CD8-positive, alpha-beta T cell (primary cell): ENCODE measurements at regions of chr9 and their contacts with region 1.

Region 1: DNA sequence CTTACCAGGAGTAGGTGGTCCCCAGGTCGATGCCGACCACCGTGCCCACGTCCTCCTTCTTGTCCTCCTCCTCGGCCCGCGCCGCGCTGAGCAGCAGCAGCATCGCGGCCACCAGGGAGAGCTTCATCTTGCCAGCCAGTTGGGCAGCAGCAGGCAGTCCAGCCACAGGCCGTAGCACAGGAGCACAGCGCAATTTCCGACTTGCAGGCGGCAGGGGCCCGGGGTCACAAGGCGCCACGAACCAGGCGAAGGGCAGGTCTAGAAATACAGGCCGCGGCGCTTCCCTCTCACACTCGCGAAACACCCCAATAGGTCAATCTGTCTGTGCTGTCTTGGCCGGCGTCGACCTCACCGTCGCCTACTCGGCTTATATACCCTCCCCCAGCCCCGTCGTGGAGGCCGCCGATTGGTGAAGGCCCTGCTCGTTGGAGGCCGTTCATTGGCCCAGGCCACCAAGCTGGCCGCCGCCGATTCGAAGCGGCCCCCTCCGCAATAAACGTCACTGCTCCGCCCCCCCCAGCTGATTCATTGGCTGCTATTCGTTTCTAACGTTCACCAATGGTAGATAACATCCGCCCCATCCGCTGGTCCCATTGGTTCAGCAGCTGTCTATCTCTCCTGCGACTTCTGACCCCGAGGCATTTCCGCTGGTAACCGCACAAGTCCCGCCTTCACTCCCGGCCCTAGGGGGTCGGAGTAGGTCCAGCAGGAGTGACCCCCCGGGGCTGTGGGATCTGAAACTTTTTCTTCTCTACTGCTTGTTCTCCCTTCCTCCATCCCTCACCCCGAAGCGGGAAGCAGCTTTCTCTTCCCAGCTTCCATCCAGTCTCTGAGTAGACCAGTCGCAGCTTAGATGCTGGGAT is at the start of gene HSPA5:
- DNase-seq: peak; percentile 98 to 100 (median 99)
- ATAC-seq: peak; percentile 90
- H3K4me3 ChIP-seq: peak within 1 kb of the TSS; percentile 91 to 93
- H3K4me3 Mint-ChIP-seq: peak within 1 kb of the TSS; percentile 97
- H3K27ac ChIP-seq: peak within 1 kb of the TSS; percentile 97 to 99
- H3K27ac Mint-ChIP-seq: peak within 1 kb of the TSS; percentile 99
- H3K4me1 ChIP-seq: peaks cover 46% of the 10 kb centered on the region
- H3K4me1 Mint-ChIP-seq: peaks cover 46% of the 10 kb centered on the region
- H3K27me3 ChIP-seq: no peaks in the 10 kb centered on the region
- H3K27me3 Mint-ChIP-seq: no peaks in the 10 kb centered on the region
- CTCF ChIP-seq: no peak
- total RNA-seq, gene HSPA5: 354 to 372 TPM

Region 2: DNA sequence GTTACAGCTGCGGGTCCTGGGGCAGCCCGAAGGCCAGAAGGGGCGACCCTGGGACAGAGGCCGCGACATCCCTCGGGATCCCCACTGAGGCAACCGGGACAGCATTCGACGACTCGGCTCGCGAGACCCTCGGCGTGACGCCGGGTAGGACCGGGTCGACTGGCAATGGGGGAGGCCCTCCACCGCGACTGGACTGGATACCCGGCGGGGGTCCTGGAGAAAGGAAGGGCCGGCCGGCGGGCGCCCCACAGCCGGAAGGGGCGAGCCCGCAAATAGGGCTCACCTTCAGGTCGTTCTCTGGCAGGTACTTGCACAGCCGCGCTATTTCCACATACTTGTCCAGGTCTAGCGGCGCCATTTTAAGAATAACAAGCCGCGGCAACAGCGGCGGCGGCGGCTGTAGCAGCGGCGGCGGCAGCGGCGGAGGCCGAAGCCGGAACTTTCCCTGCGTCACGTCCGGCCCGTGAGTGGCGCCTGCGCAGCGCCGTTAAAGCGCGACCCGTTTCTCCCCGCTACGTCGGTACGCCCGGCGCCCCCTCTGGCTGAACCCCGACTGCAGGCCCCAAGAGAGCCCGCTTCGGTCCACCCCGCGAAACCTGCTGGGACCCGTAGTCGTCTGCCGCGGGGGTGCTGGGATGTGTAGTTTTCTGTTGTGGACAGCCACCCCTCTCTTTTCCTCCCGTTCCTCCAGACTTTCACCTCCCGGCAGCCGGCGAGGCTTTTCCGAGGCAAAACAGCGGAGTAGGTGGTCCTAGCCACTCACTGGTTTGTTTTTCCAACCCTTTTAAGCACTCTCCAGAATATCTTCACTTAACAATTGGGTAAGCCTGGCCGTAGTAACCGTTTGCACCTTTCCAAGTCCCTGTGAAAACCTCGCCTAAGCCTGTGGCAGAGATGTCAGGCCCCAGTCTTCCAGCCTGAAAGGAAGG is 51.6 kb before region 1 on chr9 and contains the start of gene PPP6C:
- CTCF ChIA-PET with region 1: interaction called, 5 read pairs
- POLR2A ChIA-PET with region 1: interaction called, 15 read pairs
- intact Hi-C with region 1: loop called (anchors 1 kb)
- DNase-seq: peak; percentile 94 to 99 (median 97)
- ATAC-seq: peak; percentile 95
- H3K4me3 ChIP-seq: peak within 1 kb of the TSS; percentile 98
- H3K4me3 Mint-ChIP-seq: peak within 1 kb of the TSS; percentile 97
- H3K27ac ChIP-seq: peak within 1 kb of the TSS; percentile 97 to 98
- H3K27ac Mint-ChIP-seq: peak within 1 kb of the TSS; percentile 93
- H3K4me1 ChIP-seq: peaks cover 56% of the 10 kb centered on the region
- H3K4me1 Mint-ChIP-seq: peaks cover 71% of the 10 kb centered on the region
- H3K27me3 ChIP-seq: no peaks in the 10 kb centered on the region
- H3K27me3 Mint-ChIP-seq: no peaks in the 10 kb centered on the region
- CTCF ChIP-seq: peak; percentile 63
- total RNA-seq, gene PPP6C: 37.8 to 38.3 TPM

Region 3: GRCh38 chr9:125261501-125262293 is 20.5 kb after region 1 on chr9 and contains the start of gene GAPVD1:
- CTCF ChIA-PET with region 1: interaction called, 4 read pairs
- POLR2A ChIA-PET with region 1: interaction called, 40 read pairs
- intact Hi-C with region 1: loop called (anchors 1 kb)
- DNase-seq: peak; percentile 72 to 94 (median 86)
- ATAC-seq: peak; percentile 92
- H3K4me3 ChIP-seq: peak within 1 kb of the TSS; percentile 90 to 99
- H3K4me3 Mint-ChIP-seq: peak within 1 kb of the TSS; percentile 98
- H3K27ac ChIP-seq: peak within 1 kb of the TSS; percentile 67 to 78
- H3K27ac Mint-ChIP-seq: peak within 1 kb of the TSS; percentile 94
- H3K4me1 ChIP-seq: peaks cover 29% of the 10 kb centered on the region
- H3K4me1 Mint-ChIP-seq: peaks cover 49% of the 10 kb centered on the region
- H3K27me3 ChIP-seq: no peaks in the 10 kb centered on the region
- H3K27me3 Mint-ChIP-seq: peaks cover 2% of the 10 kb centered on the region
- CTCF ChIP-seq: peak; percentile 54
- total RNA-seq, gene GAPVD1: 81.0 to 84.1 TPM

Region 4: DNA sequence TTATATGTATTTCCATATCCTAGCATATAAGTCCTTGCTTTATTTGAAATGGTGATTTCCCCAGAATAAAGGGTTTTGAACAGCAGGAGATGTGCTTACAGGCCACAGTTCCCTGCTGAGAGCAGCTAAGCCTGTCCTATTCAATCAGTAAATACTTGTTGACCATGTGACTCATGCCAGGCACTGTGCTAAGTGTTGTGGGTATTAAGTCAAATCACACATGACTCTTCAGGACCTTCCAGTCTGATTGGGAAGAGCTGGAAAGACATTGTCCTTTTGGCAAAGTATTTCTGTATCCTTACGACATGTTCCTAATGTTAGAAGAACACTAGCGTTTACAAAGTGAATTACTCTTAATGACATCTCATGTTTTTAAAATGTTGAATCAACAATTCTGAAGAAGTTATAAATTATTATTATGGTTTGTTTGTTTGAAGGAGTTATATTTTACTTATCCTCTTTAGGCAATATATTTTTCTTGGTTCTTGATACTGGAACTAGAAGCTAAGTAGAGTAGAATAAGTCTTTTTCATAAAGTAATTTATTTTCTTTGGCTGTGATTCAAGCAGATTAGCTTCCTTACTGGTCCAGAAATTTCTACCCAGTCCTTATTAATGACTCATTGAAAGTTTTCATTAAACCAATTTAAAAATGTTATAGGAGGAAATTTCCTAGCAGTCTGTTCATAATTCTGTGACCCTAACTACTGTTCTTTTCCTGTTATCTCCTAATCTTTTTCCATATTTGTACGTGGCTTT is 102.5 kb after region 1 on chr9:
- CTCF ChIA-PET with region 1: no interaction called
- POLR2A ChIA-PET with region 1: no interaction called
- intact Hi-C with region 1: no loop called
- DNase-seq: no peak
- ATAC-seq: no peak
- H3K4me3 ChIP-seq: no peak overlapping the region
- H3K4me3 Mint-ChIP-seq: no peak overlapping the region
- H3K27ac ChIP-seq: no peak overlapping the region
- H3K27ac Mint-ChIP-seq: no peak overlapping the region
- H3K4me1 ChIP-seq: no peaks in the 10 kb centered on the region
- H3K4me1 Mint-ChIP-seq: no peaks in the 10 kb centered on the region
- H3K27me3 ChIP-seq: no peaks in the 10 kb centered on the region
- H3K27me3 Mint-ChIP-seq: no peaks in the 10 kb centered on the region
- CTCF ChIP-seq: no peak

Region 5: DNA sequence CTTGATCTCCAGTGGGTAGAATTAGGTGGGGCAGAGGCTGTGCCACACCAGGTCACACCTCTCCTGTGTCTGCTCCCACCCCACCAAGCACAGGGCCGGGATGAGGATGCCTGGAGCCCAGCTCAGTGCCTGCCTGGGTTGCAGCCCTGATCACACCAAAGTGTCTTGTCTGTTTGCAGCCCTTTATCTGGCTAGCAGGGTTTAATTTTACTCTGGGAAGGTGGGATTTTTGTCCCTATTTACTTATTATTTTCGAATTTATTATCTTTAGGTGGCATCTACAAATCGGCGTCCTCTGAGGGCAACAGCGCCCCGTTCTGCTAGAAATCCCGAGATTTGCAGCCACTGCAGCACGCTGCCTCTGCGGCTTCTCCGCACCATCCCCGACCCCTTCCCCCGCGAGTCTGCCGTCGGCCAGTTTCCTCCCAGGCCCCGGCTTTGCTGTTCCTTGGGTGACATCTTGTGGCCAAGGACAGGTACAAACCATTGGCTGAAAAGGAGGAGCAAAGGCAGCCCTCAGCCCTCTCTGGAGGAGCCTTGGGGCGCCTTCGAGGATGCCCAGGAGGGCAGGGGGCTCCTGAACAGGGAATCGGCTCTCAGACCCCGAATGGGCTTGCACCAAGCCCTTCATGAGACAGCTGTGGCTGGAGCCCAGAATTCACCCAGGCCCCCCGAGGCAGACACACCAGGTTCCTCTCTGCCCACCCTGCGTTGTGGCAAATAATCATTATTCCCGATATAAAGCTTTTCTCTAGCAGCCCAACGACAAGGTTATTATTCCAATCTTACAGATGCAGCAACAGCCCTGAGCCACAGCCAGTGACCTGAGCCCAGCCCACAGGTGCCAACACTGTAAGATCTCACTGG is 133.4 kb after region 1 on chr9:
- CTCF ChIA-PET with region 1: no interaction called
- POLR2A ChIA-PET with region 1: interaction called, 5 read pairs
- intact Hi-C with region 1: loop called in 1 of 2 experiments (anchors 1 kb)
- DNase-seq: peak; percentile 25 to 77 (median 58)
- ATAC-seq: peak; percentile 96
- H3K4me3 ChIP-seq: no peak overlapping the region
- H3K4me3 Mint-ChIP-seq: peak overlapping the region; percentile 64
- H3K27ac ChIP-seq: no peak overlapping the region
- H3K27ac Mint-ChIP-seq: no peak overlapping the region
- H3K4me1 ChIP-seq: peaks cover 11% of the 10 kb centered on the region
- H3K4me1 Mint-ChIP-seq: peaks cover 10% of the 10 kb centered on the region
- H3K27me3 ChIP-seq: no peaks in the 10 kb centered on the region
- H3K27me3 Mint-ChIP-seq: peaks cover 10% of the 10 kb centered on the region
- CTCF ChIP-seq: peak; percentile 76